ENCODE measurements at regions of chr6 and their contacts with region 1.

Region 1: DNA sequence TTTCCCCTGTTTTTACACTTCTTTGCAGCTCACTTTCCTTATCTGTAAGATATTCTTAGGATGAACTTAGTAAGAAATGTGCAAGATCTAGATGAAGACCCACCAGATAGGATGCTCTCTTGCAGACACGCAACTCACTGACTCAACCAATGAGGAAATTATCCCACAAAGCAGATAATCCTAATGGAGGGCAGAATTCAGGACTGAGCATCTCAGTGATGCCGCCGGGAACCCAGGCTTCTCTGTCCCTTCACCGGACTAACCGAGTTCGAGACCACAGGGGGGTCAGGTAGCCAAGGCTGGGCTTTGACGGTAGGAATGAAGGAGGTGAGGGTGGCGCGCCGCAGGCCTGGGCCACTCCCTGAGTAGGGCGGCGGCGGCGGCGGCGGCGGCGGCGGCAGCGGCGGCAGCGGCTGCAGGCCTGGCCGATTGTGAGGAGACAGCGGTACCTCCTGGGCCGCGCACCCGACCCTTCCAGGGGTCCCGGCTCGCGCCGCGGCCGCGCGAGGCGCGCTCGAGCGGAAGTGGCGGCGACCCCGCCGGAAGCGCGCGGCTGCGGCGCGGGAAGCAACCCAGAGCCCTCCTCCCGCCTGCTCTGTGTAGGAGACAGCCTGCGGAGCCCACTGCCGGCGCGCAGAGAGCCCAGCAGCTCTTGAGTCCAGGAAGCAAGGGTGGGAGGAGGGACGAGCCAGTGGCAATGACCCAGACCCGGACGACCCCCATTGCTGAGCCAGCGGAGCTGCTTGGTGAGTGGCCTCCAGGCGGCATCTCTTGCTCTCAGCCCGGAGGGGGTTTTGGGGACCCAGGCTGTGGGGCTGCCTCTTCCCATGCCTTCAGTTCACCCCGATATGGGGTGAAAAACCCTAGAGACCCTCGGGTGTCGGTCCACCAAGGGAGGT is at the start of gene KHDC1:
- DNase-seq: peak; percentile 58
- H3K4me3 Mint-ChIP-seq: peak within 1 kb of the TSS; percentile 88
- H3K27ac Mint-ChIP-seq: peak within 1 kb of the TSS; percentile 68
- H3K4me1 Mint-ChIP-seq: peaks cover 30% of the 10 kb centered on the region
- H3K27me3 Mint-ChIP-seq: no peaks in the 10 kb centered on the region
- total RNA-seq, gene KHDC1: 6.7 and 7.1 TPM in 2 replicates

Region 2: GRCh38 chr6:73085443-73085871 is 177.5 kb before region 1 on chr6:
- intact Hi-C with region 1: no loop called
- DNase-seq: no peak
- H3K4me3 Mint-ChIP-seq: no peak overlapping the region
- H3K27ac Mint-ChIP-seq: no peak overlapping the region
- H3K4me1 Mint-ChIP-seq: peaks cover 6% of the 10 kb centered on the region
- H3K27me3 Mint-ChIP-seq: no peaks in the 10 kb centered on the region

Region 3: DNA sequence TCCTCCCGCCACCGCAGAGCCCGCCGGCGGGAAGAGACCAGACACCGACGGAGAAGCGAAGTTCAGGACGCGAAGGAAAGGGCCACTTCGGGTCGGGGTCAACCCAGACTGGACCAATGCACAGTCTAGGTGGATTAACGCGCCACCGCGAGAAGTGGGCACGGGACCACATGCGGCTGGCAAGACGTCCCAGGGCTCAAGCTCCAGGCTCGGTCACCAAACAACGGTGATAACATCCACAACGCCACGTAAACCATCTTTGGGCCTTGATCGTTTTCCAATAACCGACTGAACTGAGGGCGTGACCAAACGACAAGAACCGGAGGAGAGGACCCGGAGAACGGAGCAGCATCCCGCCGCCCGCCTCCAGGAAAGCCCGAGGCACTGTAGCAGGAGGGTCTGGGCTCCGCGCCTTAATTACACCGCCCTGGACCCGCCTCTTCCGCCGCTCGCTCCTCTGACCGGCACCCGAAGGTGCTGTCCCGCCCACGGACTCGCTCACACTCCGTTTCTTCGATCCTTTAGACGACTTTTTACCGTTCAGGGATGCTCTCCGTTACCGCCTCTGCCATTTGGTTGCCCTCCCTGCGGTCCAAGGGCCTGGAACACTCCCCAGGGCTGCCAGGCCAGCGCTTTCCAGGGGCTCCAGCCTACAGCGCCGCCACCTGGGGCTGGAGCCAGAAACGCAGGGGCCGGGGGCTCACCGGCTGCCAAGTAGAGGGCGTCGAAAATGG is 47.0 kb after region 1 on chr6:
- intact Hi-C with region 1: loop called (anchors 2 kb)
- DNase-seq: peak; percentile 52
- H3K4me3 Mint-ChIP-seq: peak overlapping the region; percentile 95
- H3K27ac Mint-ChIP-seq: peak overlapping the region; percentile 79
- H3K4me1 Mint-ChIP-seq: peaks cover 26% of the 10 kb centered on the region
- H3K27me3 Mint-ChIP-seq: peaks cover 38% of the 10 kb centered on the region